Transverse colon (tissue), 4 donors: ENCODE measurements at regions of chr2 and their contacts with region 1.

Region 1: GRCh38 chr2:68467077-68467960 is at the starts of genes APLF and FBXO48:
- DNase-seq: peak; percentile 99
- H3K4me3 ChIP-seq: peak within 1 kb of the TSS; percentile 67 to 91 (median 70)
- H3K27ac ChIP-seq: peak within 1 kb of the TSS; percentile 86 to 90 (median 89)
- H3K4me1 ChIP-seq: peaks cover 13 to 35% (median 20%) of the 10 kb centered on the region in 4 donors
- H3K27me3 ChIP-seq: no peaks in the 10 kb centered on the region
- CTCF ChIP-seq: no peak
- EP300 ChIP-seq: no peak
- POLR2A ChIP-seq: peak; percentile 72
- total RNA-seq, gene APLF: 2.9 to 28.5 (median 8.1) TPM
- total RNA-seq, gene FBXO48: 0.60 to 2.6 (median 2.2) TPM

Region 2: GRCh38 chr2:68709421-68709911 is 242.1 kb after region 1 on chr2:
- in situ Hi-C with region 1: loop called in 1 of 4 experiments (anchors 10 kb)
- intact Hi-C with region 1: no loop called
- DNase-seq: no peak
- H3K4me3 ChIP-seq: no peak overlapping the region
- H3K27ac ChIP-seq: no peak overlapping the region
- H3K4me1 ChIP-seq: peaks cover 0 to 3% (median 0%) of the 10 kb centered on the region in 4 donors
- H3K27me3 ChIP-seq: no peaks in the 10 kb centered on the region
- CTCF ChIP-seq: peak; percentile 60 to 68 (median 63)
- EP300 ChIP-seq: no peak
- POLR2A ChIP-seq: no peak

Region 3: GRCh38 chr2:68715353-68716041 is 248.2 kb after region 1 on chr2:
- in situ Hi-C with region 1: no loop called
- intact Hi-C with region 1: loop called (anchors 5 kb)
- DNase-seq: peak; percentile 69
- H3K4me3 ChIP-seq: no peak overlapping the region
- H3K27ac ChIP-seq: peak overlapping the region in 2 of 4 donors; percentile 35 to 38
- H3K4me1 ChIP-seq: peaks cover 3 to 9% (median 5%) of the 10 kb centered on the region in 4 donors
- H3K27me3 ChIP-seq: no peaks in the 10 kb centered on the region
- CTCF ChIP-seq: peak; percentile 54 to 69 (median 60)
- EP300 ChIP-seq: no peak
- POLR2A ChIP-seq: no peak

Region 4: GRCh38 chr2:68925295-68925896 is 458.1 kb after region 1 on chr2:
- in situ Hi-C with region 1: no loop called
- intact Hi-C with region 1: loop called (anchors 10 kb)
- DNase-seq: no peak
- H3K4me3 ChIP-seq: no peak overlapping the region
- H3K27ac ChIP-seq: no peak overlapping the region
- H3K4me1 ChIP-seq: no peaks in the 10 kb centered on the region
- H3K27me3 ChIP-seq: no peaks in the 10 kb centered on the region
- CTCF ChIP-seq: peak; percentile 80 to 92 (median 91)
- EP300 ChIP-seq: no peak
- POLR2A ChIP-seq: no peak